Activated CD4-positive, alpha-beta memory T cell treated with anti-CD3 and anti-CD28 coated beads for 36 hours (primary cell): ENCODE measurements at regions of chr5 and their contacts with region 1.

Region 1: GRCh38 chr5:138065102-138065501 is 18.7 kb upstream of the WNT8A start:
- DNase-seq: peak; percentile 15
- H3K4me3 Mint-ChIP-seq: no peak overlapping the region
- H3K27ac Mint-ChIP-seq: no peak overlapping the region
- H3K4me1 Mint-ChIP-seq: peaks cover 4% of the 10 kb centered on the region
- H3K27me3 Mint-ChIP-seq: no peaks in the 10 kb centered on the region

Region 2: DNA sequence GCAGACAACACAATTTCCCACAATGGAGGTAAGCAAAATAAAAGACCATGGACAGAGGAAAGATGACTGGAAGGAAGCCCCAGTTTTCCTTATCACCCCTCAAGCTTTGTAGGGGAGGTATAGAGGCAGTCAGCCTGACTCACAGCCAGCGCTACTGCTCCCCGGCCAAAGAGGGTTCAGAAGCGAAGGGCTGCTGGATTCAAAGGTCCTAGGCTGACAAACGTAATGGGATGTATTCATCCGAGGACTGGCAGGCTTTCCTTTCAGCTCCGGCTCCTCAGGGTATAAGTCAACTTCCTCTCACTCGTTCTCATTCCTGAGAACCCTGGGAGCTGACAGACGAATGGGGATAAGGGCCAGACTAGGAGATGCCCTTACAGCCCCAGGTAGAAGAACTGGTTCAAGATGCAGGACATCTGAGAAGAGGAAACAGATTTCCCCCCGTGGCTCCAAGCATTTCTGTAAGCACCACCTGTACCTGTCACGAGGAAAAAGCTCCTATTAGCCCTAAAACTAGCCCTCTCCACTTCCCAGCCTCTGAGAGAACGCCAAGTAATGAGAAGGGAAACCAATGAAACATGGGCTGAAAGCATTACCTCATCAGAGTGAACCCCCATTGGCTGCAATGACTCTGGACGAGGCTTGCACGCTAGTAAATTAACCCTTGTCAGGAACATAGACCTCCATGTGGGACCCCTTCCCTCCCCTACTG is 10.1 kb before region 1 on chr5:
- CTCF ChIA-PET with region 1: interaction called, 19 read pairs
- POLR2A ChIA-PET with region 1: no interaction called
- intact Hi-C with region 1: no loop called
- DNase-seq: no peak
- H3K4me3 Mint-ChIP-seq: no peak overlapping the region
- H3K27ac Mint-ChIP-seq: no peak overlapping the region
- H3K4me1 Mint-ChIP-seq: peaks cover 17% of the 10 kb centered on the region
- H3K27me3 Mint-ChIP-seq: no peaks in the 10 kb centered on the region

Region 3: GRCh38 chr5:138128334-138128733 is 63.2 kb after region 1 on chr5:
- CTCF ChIA-PET with region 1: interaction called, 14 read pairs
- POLR2A ChIA-PET with region 1: no interaction called
- intact Hi-C with region 1: loop called (anchors 2 kb)
- DNase-seq: no peak
- H3K4me3 Mint-ChIP-seq: no peak overlapping the region
- H3K27ac Mint-ChIP-seq: no peak overlapping the region
- H3K4me1 Mint-ChIP-seq: peaks cover 2% of the 10 kb centered on the region
- H3K27me3 Mint-ChIP-seq: peaks cover 3% of the 10 kb centered on the region

Region 4: DNA sequence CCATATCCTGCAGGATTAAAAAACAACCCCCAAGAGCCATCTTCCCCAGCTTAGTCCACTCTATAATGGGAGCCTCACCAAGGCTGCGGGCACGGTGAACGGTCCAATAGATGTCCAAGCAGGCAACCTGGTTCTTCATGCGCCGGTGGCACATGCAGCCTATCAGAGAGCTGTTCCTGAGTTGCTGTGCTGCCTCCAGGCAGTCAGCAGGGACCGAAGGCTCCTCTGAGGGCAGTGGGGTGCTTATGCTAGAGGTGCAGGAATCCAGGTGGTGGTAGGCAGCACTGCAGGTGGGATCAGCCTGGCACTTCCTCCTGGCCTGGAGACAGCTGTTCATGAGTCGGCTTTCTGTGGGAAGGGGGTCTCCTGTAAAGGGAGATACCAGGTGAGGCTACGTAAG is 199.1 kb after region 1 on chr5:
- CTCF ChIA-PET with region 1: no interaction called
- POLR2A ChIA-PET with region 1: no interaction called
- intact Hi-C with region 1: no loop called
- DNase-seq: no peak
- H3K4me3 Mint-ChIP-seq: no peak overlapping the region
- H3K27ac Mint-ChIP-seq: no peak overlapping the region
- H3K4me1 Mint-ChIP-seq: peaks cover 6% of the 10 kb centered on the region
- H3K27me3 Mint-ChIP-seq: peaks cover 13% of the 10 kb centered on the region